IMR-90 (cell line): ENCODE measurements at regions of chr20 and their contacts with region 1.

Region 1: GRCh38 chr20:23606652-23607049 is 934 bp upstream of the CST9 start:
- DNase-seq: peak; percentile 64
- ATAC-seq: peak; percentile 99
- H3K4me3 ChIP-seq: no peak overlapping the region
- H3K27ac ChIP-seq: no peak overlapping the region
- H3K4me1 ChIP-seq: no peaks in the 10 kb centered on the region
- H3K27me3 ChIP-seq: peaks cover 31% of the 10 kb centered on the region
- CTCF ChIP-seq: peak; percentile 89
- POLR2A ChIP-seq: 0 out of 2 replicates have a peak, but pooled peaks have one; percentile 25
- RAD21 ChIP-seq: peak; percentile 89

Region 2: DNA sequence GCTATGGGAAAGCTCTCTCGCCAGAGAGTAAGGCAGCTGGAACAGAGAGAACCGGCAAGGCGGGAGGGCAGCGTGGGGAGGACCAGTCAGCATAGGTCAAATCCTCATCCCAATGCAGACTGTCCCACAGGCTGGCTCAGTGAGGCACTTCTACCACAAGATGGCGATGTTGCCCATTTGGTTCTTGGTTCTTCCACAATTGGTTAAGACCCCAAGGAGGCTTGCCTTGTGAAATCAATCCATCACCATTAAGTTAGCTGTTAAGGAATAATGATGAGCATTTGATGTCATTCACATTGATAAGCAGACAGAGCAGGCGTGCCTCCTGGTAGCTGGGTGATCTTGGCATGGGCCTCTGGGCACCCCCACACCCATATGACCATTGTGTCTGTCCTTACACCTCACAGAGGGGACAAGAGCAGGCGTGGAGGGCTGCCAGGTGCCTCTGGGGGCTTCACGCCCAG is 164.8 kb before region 1 on chr20:
- CTCF ChIA-PET with region 1: interaction called, 16 read pairs
- POLR2A ChIA-PET with region 1: no interaction called
- dilution Hi-C with region 1: no loop called
- in situ Hi-C with region 1: loop called (anchors 10 kb)
- intact Hi-C with region 1: loop called (anchors 1 kb)
- DNase-seq: peak; percentile 72
- ATAC-seq: peak; percentile 85
- H3K4me3 ChIP-seq: no peak overlapping the region
- H3K27ac ChIP-seq: no peak overlapping the region
- H3K4me1 ChIP-seq: 0 out of 2 replicates have a peak, but pooled peaks cover 3% of the 10 kb centered on the region
- H3K27me3 ChIP-seq: peaks cover 3% of the 10 kb centered on the region; the same call in 1 of the 2 replicates
- CTCF ChIP-seq: peak; percentile 85
- POLR2A ChIP-seq: no peak
- RAD21 ChIP-seq: peak; percentile 78

Region 3: DNA sequence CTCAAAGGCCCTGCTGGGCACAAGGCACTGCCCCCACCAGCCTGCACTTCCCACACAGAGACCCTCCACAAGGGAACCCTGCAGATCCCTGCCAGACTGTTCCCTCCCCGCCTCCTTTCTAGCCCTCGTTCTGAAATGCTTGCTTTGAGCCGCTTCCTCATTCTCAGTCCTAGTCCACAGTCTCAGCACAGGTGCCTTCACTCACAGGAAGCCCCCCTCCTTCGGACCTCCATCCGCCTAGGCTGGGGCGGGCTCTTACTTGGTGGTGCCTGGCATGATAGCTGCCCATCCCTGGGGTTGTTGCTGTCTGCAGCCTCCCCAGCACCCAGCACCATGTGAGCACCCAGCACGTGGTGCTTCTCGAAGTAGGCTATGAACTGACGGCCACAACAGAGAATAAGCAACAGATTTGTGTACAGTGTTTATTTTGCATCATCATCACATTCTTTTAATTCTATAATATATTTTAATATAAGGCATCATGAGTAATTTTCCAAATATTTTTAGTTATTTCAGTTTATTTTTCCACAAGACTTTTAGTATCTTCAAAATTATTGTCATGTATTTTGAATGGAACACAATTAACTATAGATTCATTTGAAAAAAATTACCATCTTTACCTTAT is 260.6 kb after region 1 on chr20:
- CTCF ChIA-PET with region 1: no interaction called
- POLR2A ChIA-PET with region 1: no interaction called
- dilution Hi-C with region 1: no loop called
- in situ Hi-C with region 1: no loop called
- intact Hi-C with region 1: no loop called
- DNase-seq: no peak
- ATAC-seq: no peak
- H3K4me3 ChIP-seq: no peak overlapping the region
- H3K27ac ChIP-seq: no peak overlapping the region
- H3K4me1 ChIP-seq: no peaks in the 10 kb centered on the region
- H3K27me3 ChIP-seq: no peaks in the 10 kb centered on the region
- CTCF ChIP-seq: no peak
- POLR2A ChIP-seq: no peak
- RAD21 ChIP-seq: no peak